ENCODE measurements at regions of chr12 and their contacts with region 1.

Region 1: GRCh38 chr12:111359231-111359913 is 9.5 kb downstream of the PHETA1 start:
- DNase-seq: no peak
- H3K4me3 ChIP-seq: no peak overlapping the region
- H3K27ac ChIP-seq: no peak overlapping the region
- H3K4me1 ChIP-seq: no peaks in the 10 kb centered on the region
- H3K27me3 ChIP-seq: no peaks in the 10 kb centered on the region
- CTCF ChIP-seq: no peak

Region 2: GRCh38 chr12:110217996-110218674 is 1141.2 kb before region 1 on chr12:
- intact Hi-C with region 1: loop called (anchors 10 kb)
- DNase-seq: no peak
- H3K4me3 ChIP-seq: no peak overlapping the region
- H3K27ac ChIP-seq: no peak overlapping the region
- H3K4me1 ChIP-seq: no peaks in the 10 kb centered on the region
- H3K27me3 ChIP-seq: no peaks in the 10 kb centered on the region
- CTCF ChIP-seq: no peak